ENCODE measurements at regions of chr1 and their contacts with region 1.

Region 1: GRCh38 chr1:48061162-48062136 is 64.3 kb upstream of the TRABD2B start:
- DNase-seq: peak in 1 of 2 donors; percentile 74
- ATAC-seq: peak in 6 of 8 donors; percentile 55 to 84 (median 68)
- H3K4me3 ChIP-seq: no peak overlapping the region
- H3K27ac ChIP-seq: no peak overlapping the region
- H3K4me1 ChIP-seq: peaks cover 0 to 8% (median 0%) of the 10 kb centered on the region in 9 donors
- H3K27me3 ChIP-seq: peaks cover 0 to 45% (median 6%) of the 10 kb centered on the region in 7 donors
- CTCF ChIP-seq: peak; percentile 51 to 82 (median 76)

Region 2: DNA sequence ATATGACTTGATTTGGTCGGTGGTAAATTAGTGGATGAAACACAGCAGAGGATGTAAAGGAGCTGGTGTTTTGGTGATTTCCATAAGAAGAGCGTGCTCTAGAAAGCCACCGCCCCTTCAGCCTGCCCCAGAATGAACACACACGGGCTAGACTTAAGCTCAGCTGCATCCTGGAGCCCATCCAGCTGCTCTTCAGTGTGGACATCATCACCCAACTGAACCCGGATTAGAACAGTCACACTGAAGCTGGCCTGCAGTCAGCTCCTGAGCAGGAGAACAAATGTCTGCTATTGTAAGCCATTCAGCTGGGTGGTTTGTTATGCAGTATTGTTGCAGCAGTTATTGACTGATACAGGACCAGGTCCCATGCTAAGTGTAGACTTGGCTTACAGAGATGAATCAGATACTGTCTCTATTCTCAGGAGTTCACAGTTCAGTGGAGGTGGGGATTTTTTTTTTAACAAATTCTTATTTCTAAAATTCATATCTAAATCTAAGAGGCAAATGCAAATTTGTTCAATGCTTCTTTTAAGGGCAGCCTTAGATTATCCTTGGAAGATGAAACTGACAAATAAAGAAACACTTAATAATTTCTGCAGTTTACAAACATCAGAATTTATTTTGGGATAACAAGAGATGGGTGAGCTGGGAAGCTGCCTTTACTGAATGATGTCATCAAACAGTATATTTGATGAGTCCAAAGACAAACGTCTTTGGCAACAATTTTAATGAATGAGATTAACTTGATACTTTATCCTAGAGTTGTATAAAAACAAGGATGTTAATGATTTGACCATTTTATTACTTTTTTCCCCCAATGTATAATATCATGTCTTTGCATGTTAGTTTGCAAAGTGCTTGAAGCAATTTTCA is 315.5 kb before region 1 on chr1:
- intact Hi-C with region 1: loop called in 3 of 10 experiments (anchors 5 kb)
- DNase-seq: no peak
- ATAC-seq: peak in 2 of 8 donors; percentile 41 to 71
- H3K4me3 ChIP-seq: no peak overlapping the region
- H3K27ac ChIP-seq: no peak overlapping the region
- H3K4me1 ChIP-seq: peaks cover 0 to 1% (median 0%) of the 10 kb centered on the region in 9 donors
- H3K27me3 ChIP-seq: peaks cover 0 to 25% (median 0%) of the 10 kb centered on the region in 7 donors
- CTCF ChIP-seq: no peak

Measured in heart right ventricle (tissue), 16 donors.